SK-N-SH (cell line): ENCODE measurements at regions of chr12 and their contacts with region 1.

Region 1: DNA sequence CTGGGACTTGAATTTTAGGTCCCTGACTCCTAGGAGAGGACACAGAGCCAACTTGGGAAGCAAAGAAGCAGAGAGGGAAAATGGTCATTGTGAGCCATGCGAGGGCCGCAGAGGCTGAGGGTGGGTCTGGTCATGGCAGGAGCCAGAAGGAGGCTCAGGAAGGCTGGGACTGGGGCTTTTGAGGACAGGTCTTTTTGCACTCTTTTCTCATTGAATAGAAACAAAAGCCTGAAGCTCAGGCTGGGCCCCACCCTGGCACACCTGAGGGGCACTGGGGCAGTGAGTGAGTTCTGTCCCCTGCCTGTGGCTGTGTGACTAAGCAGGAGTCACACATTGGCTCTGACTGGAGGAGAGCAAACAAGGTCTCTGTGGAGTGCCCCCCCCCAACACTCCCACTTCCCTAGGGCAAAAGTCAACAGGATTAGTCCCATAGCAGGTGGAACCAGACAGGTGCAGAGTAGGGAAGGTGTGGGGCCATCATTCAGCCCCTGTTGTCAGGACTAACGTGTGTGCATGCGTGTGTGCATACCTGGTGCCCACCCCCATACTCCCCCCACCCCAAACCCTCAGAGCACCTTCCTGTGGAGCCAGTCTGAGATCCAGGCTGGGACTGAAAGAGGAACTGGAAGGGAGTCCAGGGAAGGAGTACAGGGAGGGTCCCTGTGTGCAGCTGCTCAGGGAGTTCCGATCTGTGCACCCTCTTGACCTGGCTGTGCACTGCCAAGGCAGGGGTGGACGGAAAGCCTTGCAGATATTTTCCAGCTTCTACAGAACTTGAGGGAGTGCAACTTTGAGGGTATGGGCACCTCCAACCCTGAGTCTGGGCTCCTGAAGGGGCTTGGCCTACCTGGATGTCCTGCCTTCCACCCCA is 3.0 kb downstream of the KRT7 start:
- DNase-seq: peak; percentile 20
- H3K4me3 ChIP-seq: no peak overlapping the region
- H3K27ac ChIP-seq: no peak overlapping the region
- H3K4me1 ChIP-seq: peaks cover 0 to 3% of the 10 kb centered on the region in 2 experiments; a peak in 2 of 4 replicates
- H3K27me3 ChIP-seq: no peaks in the 10 kb centered on the region
- CTCF ChIP-seq: no peak
- EP300 ChIP-seq: no peak
- RAD21 ChIP-seq: no peak

Region 2: GRCh38 chr12:52171950-52172512 is 64.0 kb before region 1 on chr12:
- CTCF ChIA-PET with region 1: no interaction called
- POLR2A ChIA-PET with region 1: no interaction called
- DNase-seq: no peak
- H3K4me3 ChIP-seq: no peak overlapping the region
- H3K27ac ChIP-seq: no peak overlapping the region; a peak in 1 of 4 replicates
- H3K4me1 ChIP-seq: peaks cover 12 to 52% of the 10 kb centered on the region in 2 experiments; a peak in 2 of 4 replicates
- H3K27me3 ChIP-seq: no peaks in the 10 kb centered on the region
- CTCF ChIP-seq: peak; percentile 56
- EP300 ChIP-seq: no peak
- RAD21 ChIP-seq: peak; percentile 57

Region 3: DNA sequence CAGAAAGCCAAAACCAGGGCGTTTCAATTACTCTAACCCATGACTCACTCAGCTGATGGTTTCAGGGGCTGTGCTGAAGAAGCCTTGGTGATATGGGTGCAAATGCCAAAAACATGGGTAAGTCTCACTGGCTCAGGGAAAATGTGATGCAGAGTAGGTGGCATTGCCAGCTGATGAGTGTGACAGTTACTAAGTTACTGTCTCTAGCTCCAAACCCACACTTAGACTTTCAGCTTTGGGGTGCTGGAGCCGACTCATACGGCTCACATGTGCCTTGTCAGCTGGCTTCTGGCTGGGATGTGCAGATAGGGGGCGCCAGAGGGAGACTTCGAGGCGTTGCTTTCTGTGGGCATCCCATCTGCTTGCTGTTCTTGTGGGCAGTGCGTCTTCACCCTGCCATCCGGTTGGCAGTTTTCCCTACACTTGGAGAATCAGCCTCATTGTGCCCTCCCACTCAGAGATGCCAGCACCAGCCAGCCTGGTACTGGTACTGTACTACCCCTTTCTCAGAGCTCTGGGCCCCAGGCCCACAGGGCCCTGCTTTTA is 14.1 kb before region 1 on chr12:
- CTCF ChIA-PET with region 1: interaction called, 22 read pairs
- POLR2A ChIA-PET with region 1: no interaction called
- DNase-seq: no peak
- H3K4me3 ChIP-seq: no peak overlapping the region; a peak in 1 of 4 replicates
- H3K27ac ChIP-seq: peak overlapping the region in 1 of 2 experiments; percentile 33; a peak in 1 of 4 replicates
- H3K4me1 ChIP-seq: peaks cover 3 to 9% of the 10 kb centered on the region in 2 experiments; a peak in 2 of 4 replicates
- H3K27me3 ChIP-seq: no peaks in the 10 kb centered on the region
- CTCF ChIP-seq: peak; percentile 66
- EP300 ChIP-seq: no peak
- RAD21 ChIP-seq: peak; percentile 35